ENCODE measurements at regions of chr2 and their contacts with region 1.

Region 1: DNA sequence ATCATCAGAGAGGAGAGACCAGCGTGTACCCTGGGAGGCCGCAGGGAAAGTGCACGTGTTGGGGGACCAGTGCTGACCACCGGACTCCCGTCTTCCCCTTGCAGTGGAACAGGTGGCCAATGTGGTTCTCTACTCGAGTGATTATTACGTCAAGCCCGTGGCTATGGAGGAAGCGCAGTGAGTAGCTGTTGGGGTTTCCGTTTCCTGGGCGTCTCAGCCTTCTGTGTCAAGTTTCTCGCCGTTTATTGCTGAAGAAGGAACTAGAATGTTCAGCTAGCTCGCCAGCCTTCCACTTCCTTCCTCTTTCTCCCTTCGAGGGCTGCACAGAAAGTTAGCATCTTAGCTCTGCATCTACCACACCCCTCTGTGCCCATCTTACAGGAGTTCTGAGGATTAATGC is 22.8 kb upstream of the DGKD start:
- DNase-seq: peak; percentile 68
- ATAC-seq: peak; percentile 91
- H3K4me3 Mint-ChIP-seq: peak overlapping the region; percentile 42
- H3K27ac Mint-ChIP-seq: peak overlapping the region; percentile 97
- H3K4me1 Mint-ChIP-seq: peaks cover 82% of the 10 kb centered on the region
- H3K27me3 Mint-ChIP-seq: no peaks in the 10 kb centered on the region
- CTCF ChIP-seq: no peak

Region 2: GRCh38 chr2:233267516-233268245 is 63.9 kb before region 1 on chr2:
- CTCF ChIA-PET with region 1: interaction called, 3 read pairs
- POLR2A ChIA-PET with region 1: interaction called, 5 read pairs
- intact Hi-C with region 1: loop called (anchors 5 kb)
- DNase-seq: peak; percentile 20
- ATAC-seq: peak; percentile 91
- H3K4me3 Mint-ChIP-seq: peak overlapping the region; percentile 56
- H3K27ac Mint-ChIP-seq: peak overlapping the region; percentile 82
- H3K4me1 Mint-ChIP-seq: peaks cover 51% of the 10 kb centered on the region
- H3K27me3 Mint-ChIP-seq: no peaks in the 10 kb centered on the region
- CTCF ChIP-seq: no peak

Region 3: GRCh38 chr2:233346930-233347329 is 15.4 kb after region 1 on chr2:
- CTCF ChIA-PET with region 1: interaction called, 10 read pairs
- POLR2A ChIA-PET with region 1: interaction called, 35 read pairs
- intact Hi-C with region 1: no loop called
- DNase-seq: no peak
- ATAC-seq: no peak
- H3K4me3 Mint-ChIP-seq: no peak overlapping the region
- H3K27ac Mint-ChIP-seq: peak overlapping the region; percentile 8
- H3K4me1 Mint-ChIP-seq: peaks cover 60% of the 10 kb centered on the region
- H3K27me3 Mint-ChIP-seq: no peaks in the 10 kb centered on the region
- CTCF ChIP-seq: no peak

Region 4: GRCh38 chr2:233380132-233380895 is 48.8 kb after region 1 on chr2:
- CTCF ChIA-PET with region 1: interaction called, 3 read pairs
- POLR2A ChIA-PET with region 1: interaction called, 8 read pairs
- intact Hi-C with region 1: loop called (anchors 1 kb)
- DNase-seq: peak; percentile 50
- ATAC-seq: peak; percentile 83
- H3K4me3 Mint-ChIP-seq: peak overlapping the region; percentile 67
- H3K27ac Mint-ChIP-seq: peak overlapping the region; percentile 91
- H3K4me1 Mint-ChIP-seq: peaks cover 83% of the 10 kb centered on the region
- H3K27me3 Mint-ChIP-seq: no peaks in the 10 kb centered on the region
- CTCF ChIP-seq: no peak